ENCODE measurements at regions of chr3 and their contacts with region 1.

Region 1: DNA sequence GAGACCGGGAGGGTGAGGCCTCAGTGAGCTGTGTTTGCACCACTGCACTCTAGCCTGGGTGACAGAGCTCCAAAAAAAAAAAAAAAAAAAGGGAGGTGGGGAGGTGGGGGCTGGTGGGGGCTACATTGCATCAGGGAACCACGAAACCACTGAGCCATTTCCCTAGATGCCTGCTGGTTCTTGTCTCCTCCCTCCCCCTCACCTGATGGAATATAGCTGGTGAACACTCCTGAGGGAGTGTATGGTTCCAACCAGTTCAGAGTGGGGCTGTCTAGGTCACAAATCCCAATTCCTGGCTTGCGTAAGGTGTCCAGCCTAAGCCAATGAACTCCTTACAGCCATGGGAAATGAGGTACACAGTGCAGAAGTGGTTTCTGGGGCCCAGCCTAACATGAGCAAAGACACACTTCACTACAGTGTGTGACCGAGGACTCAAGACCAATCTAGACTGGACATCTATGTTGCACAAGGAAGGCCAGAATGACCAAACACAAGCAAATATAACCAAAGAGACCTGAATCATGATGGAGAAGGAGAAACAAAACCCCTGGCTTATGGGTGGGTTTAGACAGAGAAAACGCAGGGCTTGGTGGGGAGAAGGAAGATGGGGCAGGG is 39.1 kb upstream of the OSBPL11 start:
- DNase-seq: no peak
- ATAC-seq: no peak
- H3K4me3 ChIP-seq: no peak overlapping the region
- H3K4me3 Mint-ChIP-seq: no peak overlapping the region
- H3K27ac ChIP-seq: no peak overlapping the region
- H3K27ac Mint-ChIP-seq: no peak overlapping the region
- H3K4me1 ChIP-seq: no peaks in the 10 kb centered on the region
- H3K4me1 Mint-ChIP-seq: no peaks in the 10 kb centered on the region
- H3K27me3 ChIP-seq: peaks cover 0 to 5% of the 10 kb centered on the region in 2 experiments
- H3K27me3 Mint-ChIP-seq: peaks cover 21% of the 10 kb centered on the region
- CTCF ChIP-seq: no peak

Region 2: DNA sequence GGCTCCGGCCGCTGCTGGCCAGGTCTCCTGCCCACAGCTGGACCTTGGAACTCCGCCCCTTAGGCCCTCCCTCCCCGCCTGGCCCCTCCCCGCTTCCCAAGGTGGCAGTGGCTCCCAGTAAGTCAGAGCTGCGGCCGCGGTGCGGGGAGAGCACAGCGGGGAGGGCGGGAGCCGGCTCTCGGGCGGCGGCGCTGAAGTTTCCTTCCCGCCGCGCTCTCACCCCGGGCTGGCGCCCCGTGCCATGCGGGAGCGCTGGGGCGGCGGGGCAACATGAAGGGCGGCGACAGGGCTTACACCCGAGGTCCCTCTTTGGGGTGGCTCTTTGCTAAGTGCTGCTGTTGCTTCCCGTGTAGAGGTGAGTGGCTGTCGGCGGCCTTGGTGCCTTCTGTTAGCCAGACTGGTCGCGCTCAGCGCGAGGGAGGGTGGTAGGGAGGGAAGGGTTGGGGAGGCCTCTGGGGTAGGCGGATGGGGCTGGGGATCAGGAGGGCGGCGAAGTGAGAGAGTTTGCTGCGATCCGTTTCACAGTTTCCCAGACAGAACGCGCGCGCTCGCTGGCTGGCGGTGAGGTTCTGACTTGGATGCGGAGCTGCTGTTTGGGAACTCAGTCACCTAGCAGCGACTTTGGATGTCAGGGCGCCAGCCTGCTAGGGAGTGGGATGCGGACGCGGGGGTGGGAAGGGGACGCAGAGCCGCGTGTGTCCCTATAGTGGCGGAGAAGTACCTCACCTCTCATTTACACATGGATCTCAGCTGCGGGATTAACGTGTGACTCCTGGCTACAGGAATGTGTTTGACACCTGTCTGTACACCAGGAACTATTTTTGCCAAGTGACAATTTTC is 1049.7 kb before region 1 on chr3:
- CTCF ChIA-PET with region 1: no interaction called
- POLR2A ChIA-PET with region 1: no interaction called
- intact Hi-C with region 1: no loop called
- DNase-seq: peak in 12 of 14 experiments; percentile 4 to 41 (median 18)
- ATAC-seq: peak; percentile 63
- H3K4me3 ChIP-seq: peak overlapping the region; percentile 55
- H3K4me3 Mint-ChIP-seq: peak overlapping the region; percentile 90
- H3K27ac ChIP-seq: no peak overlapping the region
- H3K27ac Mint-ChIP-seq: peak overlapping the region; percentile 80
- H3K4me1 ChIP-seq: peaks cover 20% of the 10 kb centered on the region
- H3K4me1 Mint-ChIP-seq: peaks cover 24% of the 10 kb centered on the region
- H3K27me3 ChIP-seq: peaks cover 24 to 30% of the 10 kb centered on the region in 2 experiments
- H3K27me3 Mint-ChIP-seq: peaks cover 68% of the 10 kb centered on the region
- CTCF ChIP-seq: no peak

Region 3: GRCh38 chr3:125055913-125056745 is 578.3 kb before region 1 on chr3 and contains the start of gene HEG1:
- CTCF ChIA-PET with region 1: no interaction called
- POLR2A ChIA-PET with region 1: no interaction called
- intact Hi-C with region 1: no loop called
- DNase-seq: peak; percentile 48 to 88 (median 73)
- ATAC-seq: peak; percentile 55
- H3K4me3 ChIP-seq: peak within 1 kb of the TSS; percentile 74
- H3K4me3 Mint-ChIP-seq: peak within 1 kb of the TSS; percentile 96
- H3K27ac ChIP-seq: peak within 1 kb of the TSS; percentile 74 to 86
- H3K27ac Mint-ChIP-seq: peak within 1 kb of the TSS; percentile 90
- H3K4me1 ChIP-seq: peaks cover 40% of the 10 kb centered on the region
- H3K4me1 Mint-ChIP-seq: peaks cover 45% of the 10 kb centered on the region
- H3K27me3 ChIP-seq: no peaks in the 10 kb centered on the region
- H3K27me3 Mint-ChIP-seq: peaks cover 5% of the 10 kb centered on the region
- CTCF ChIP-seq: no peak
- total RNA-seq, gene HEG1: 31.2 to 32.6 TPM

Region 4: DNA sequence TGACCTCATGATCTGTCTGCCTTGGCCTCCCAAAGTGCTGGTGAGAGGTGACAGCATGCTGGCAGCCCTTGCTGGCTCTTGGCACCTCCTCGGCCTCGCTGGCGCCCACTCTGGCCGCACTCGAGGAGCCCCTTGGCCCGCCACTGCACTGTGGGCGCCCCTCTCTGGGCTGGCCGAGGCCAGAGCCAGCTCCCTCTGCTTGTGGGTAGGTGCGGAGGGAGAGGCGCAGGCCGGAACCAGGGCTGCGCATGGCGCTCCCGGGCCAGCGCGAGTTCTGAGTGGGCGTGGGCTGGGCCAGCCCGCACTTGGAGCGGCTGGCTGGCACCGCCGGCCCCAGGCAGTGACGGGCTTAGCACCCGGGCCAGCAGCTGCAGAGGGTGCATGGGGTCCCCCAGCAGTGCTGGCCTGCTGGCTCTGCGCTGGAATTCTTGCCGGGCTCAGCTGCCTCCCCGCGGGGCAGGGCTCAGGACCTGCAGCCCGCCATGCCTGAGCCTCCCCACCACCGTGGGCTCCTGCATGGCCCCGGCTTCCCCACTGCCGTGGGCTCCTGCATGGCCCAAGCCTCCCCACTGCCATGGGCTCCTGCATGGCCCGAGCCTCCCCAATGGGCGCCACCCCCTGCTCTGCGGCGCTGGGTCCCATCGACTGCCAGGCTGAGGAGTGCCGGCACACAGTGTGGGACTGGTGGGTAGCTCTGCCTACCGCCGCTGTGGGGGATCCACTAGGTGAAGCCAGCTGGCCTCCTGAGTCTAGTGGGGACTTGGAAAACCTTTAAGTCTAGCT is 37.2 kb after region 1 on chr3:
- CTCF ChIA-PET with region 1: no interaction called
- POLR2A ChIA-PET with region 1: no interaction called
- intact Hi-C with region 1: loop called in 1 of 2 experiments (anchors 1 kb)
- DNase-seq: no peak
- ATAC-seq: no peak
- H3K4me3 ChIP-seq: no peak overlapping the region
- H3K4me3 Mint-ChIP-seq: no peak overlapping the region
- H3K27ac ChIP-seq: no peak overlapping the region
- H3K27ac Mint-ChIP-seq: no peak overlapping the region
- H3K4me1 ChIP-seq: no peaks in the 10 kb centered on the region
- H3K4me1 Mint-ChIP-seq: no peaks in the 10 kb centered on the region
- H3K27me3 ChIP-seq: no peaks in the 10 kb centered on the region
- H3K27me3 Mint-ChIP-seq: no peaks in the 10 kb centered on the region
- CTCF ChIP-seq: no peak

Measured in CD4-positive, alpha-beta T cell (primary cell).